Endothelial cell of umbilical vein (primary cell): ENCODE measurements at regions of chr3 and their contacts with region 1.

Region 1: GRCh38 chr3:169149349-169149890 is 514.1 kb downstream of the MECOM start:
- DNase-seq: peak; percentile 93
- H3K4me3 ChIP-seq: peak overlapping the region in 2 of 3 experiments; percentile 30 to 60
- H3K27ac ChIP-seq: peak overlapping the region; percentile 82
- H3K4me1 ChIP-seq: peaks cover 47% of the 10 kb centered on the region
- H3K27me3 ChIP-seq: no peaks in the 10 kb centered on the region
- CTCF ChIP-seq: peak; percentile 88 to 89
- POLR2A ChIP-seq: peak; percentile 71

Region 2: DNA sequence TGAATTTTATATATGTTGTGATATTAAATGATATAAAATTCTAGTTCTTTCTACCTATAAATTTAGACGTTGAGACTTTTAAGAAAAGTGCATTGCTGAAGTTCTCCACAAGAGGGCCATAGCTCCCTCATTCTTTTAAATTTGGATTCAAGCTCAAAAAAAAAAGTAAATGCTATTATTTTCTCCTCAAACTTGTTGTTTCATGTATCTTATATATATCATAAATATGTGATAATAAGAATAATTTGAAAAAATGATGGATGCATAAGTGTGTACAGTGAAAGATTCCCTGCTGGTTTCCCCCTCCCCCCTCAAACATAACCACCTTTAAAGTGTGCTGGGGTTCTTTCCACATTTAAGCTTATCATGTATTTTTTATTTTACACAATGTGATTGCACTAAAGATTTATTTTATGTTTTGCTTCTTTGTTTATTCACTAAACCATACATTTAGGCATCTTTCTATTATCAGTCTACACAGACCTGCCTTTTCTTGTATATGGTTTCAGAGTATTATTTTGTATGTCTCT is 284.3 kb before region 1 on chr3:
- CTCF ChIA-PET with region 1: interaction called, 24 read pairs
- POLR2A ChIA-PET with region 1: interaction called, 4 read pairs
- dilution Hi-C with region 1: no loop called
- intact Hi-C with region 1: loop called (anchors 2 kb)
- DNase-seq: peak; percentile 71
- H3K4me3 ChIP-seq: no peak overlapping the region
- H3K27ac ChIP-seq: no peak overlapping the region
- H3K4me1 ChIP-seq: no peaks in the 10 kb centered on the region
- H3K27me3 ChIP-seq: peaks cover 0 to 3% of the 10 kb centered on the region in 2 experiments
- CTCF ChIP-seq: peak; percentile 48 to 52
- POLR2A ChIP-seq: no peak

Region 3: DNA sequence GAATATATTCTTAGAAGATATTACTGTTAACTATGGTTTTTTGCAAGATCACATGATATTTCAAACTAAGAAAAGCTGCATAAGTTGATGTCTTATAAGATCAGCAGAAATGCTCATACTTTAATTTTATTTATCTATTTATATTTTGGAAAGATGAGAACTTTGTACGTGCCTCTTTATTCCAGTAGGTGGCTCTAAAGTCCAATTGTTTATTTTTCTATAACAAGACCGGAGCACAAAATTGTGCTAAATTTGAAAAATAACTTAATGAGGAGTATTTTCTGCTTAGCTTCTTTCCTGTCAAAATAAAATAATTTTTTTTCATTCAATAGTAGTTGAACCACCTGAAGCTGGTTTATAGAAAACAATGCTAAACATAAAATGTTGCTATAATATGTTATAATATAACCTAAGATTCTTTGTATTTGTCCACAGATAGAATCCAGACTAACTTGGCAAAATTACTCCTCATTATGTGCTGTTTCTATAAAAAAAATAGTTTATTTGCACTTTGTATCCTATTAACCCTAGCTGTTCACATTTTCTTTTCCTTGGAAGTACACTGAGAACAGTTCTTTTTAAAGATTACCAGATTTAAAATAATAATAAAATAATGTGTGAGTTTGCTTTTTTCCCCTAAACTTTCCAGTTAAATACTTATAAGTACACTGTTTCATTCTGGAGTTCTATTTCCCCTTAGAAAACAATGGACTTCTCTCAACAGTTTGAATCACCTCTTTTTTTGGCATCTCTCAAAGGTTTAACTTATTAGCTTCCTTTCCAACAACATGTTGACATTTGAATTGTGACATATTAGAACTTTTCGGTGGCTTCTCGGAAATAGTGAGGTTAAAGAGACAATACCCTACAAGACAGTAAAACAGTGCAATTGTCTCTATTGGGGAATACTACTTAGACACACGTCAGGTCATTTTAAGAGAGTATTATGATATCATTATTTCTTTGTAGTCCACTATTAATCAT is 15.9 kb before region 1 on chr3:
- CTCF ChIA-PET with region 1: interaction called, 40 read pairs
- POLR2A ChIA-PET with region 1: no interaction called
- dilution Hi-C with region 1: no loop called
- intact Hi-C with region 1: loop called (anchors 1 kb)
- DNase-seq: peak; percentile 83
- H3K4me3 ChIP-seq: no peak overlapping the region
- H3K27ac ChIP-seq: peak overlapping the region; percentile 52
- H3K4me1 ChIP-seq: peaks cover 44% of the 10 kb centered on the region
- H3K27me3 ChIP-seq: no peaks in the 10 kb centered on the region
- CTCF ChIP-seq: peak in 1 of 2 donors; percentile 16
- POLR2A ChIP-seq: peak; percentile 17

Region 4: GRCh38 chr3:169286214-169286613 is 136.8 kb after region 1 on chr3:
- CTCF ChIA-PET with region 1: interaction called, 11 read pairs
- POLR2A ChIA-PET with region 1: interaction called, 3 read pairs
- dilution Hi-C with region 1: no loop called
- intact Hi-C with region 1: no loop called
- DNase-seq: no peak
- H3K4me3 ChIP-seq: no peak overlapping the region
- H3K27ac ChIP-seq: no peak overlapping the region
- H3K4me1 ChIP-seq: peaks cover 20% of the 10 kb centered on the region
- H3K27me3 ChIP-seq: no peaks in the 10 kb centered on the region
- CTCF ChIP-seq: no peak
- POLR2A ChIP-seq: no peak

Region 5: GRCh38 chr3:169430707-169431404 is 281.4 kb after region 1 on chr3:
- CTCF ChIA-PET with region 1: interaction called, 10 read pairs
- POLR2A ChIA-PET with region 1: no interaction called
- dilution Hi-C with region 1: no loop called
- intact Hi-C with region 1: loop called (anchors 1 kb)
- DNase-seq: peak; percentile 90
- H3K4me3 ChIP-seq: no peak overlapping the region
- H3K27ac ChIP-seq: peak overlapping the region; percentile 79
- H3K4me1 ChIP-seq: peaks cover 30% of the 10 kb centered on the region
- H3K27me3 ChIP-seq: no peaks in the 10 kb centered on the region
- CTCF ChIP-seq: no peak
- POLR2A ChIP-seq: no peak

Region 6: GRCh38 chr3:169575373-169575772 is 426.0 kb after region 1 on chr3:
- CTCF ChIA-PET with region 1: interaction called, 6 read pairs
- POLR2A ChIA-PET with region 1: no interaction called
- dilution Hi-C with region 1: no loop called
- intact Hi-C with region 1: loop called (anchors 5 kb)
- DNase-seq: peak; percentile 85
- H3K4me3 ChIP-seq: peak overlapping the region in 1 of 3 experiments; percentile 28
- H3K27ac ChIP-seq: peak overlapping the region; percentile 15
- H3K4me1 ChIP-seq: peaks cover 25% of the 10 kb centered on the region
- H3K27me3 ChIP-seq: no peaks in the 10 kb centered on the region
- CTCF ChIP-seq: no peak
- POLR2A ChIP-seq: peak; percentile 16

Region 7: DNA sequence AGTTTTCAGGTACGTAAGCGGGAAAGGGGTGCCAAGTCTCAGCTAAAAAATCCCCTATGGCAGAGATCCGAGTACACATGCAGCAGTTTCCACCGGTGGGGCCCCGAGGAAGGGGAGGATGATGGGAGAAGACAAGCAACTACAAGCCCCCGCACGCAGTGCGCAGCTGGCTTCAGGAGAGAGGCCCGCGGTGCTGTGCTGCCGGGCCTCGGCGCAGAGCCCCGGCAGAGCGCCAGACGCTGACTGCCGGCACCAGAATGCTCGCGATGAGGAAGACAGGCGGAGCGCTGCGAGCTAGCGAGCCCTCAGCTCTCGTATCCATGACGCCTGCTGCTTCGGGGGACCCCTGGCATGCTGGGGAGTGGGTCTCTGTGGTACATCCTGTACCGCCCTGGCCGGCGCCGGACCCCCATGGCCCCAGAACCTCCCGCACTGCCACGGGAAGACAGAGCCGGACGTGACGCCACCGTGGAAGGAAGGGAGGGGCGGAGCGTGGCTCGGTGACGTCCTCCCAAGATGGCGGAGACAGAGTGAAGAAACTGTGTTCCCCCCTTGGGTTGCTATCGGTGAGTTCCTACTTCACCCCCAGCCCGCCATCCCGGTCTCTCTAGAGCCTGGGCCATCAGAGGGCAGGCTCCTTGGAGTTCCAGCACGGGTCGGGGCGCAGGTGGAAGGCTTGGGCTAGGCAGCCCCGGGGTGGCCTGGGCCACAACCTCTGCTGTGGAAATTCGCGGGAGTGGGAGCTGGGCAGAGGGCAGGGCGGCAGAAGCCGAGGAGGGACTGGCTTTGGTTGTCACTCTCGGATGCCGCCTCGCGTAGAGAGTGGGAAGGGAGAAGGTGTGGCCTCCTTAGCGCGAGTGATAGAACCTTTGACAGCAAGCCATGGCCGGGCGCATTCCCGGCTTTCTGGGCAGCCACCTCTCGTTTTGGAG is 623.7 kb after region 1 on chr3 and contains the start of gene MYNN:
- CTCF ChIA-PET with region 1: no interaction called
- POLR2A ChIA-PET with region 1: interaction called, 4 read pairs
- dilution Hi-C with region 1: no loop called
- intact Hi-C with region 1: loop called (anchors 5 kb)
- DNase-seq: peak; percentile 93
- H3K4me3 ChIP-seq: peak within 1 kb of the TSS; percentile 75 to 94 (median 77)
- H3K27ac ChIP-seq: peak within 1 kb of the TSS; percentile 94
- H3K4me1 ChIP-seq: peaks cover 13% of the 10 kb centered on the region
- H3K27me3 ChIP-seq: no peaks in the 10 kb centered on the region
- CTCF ChIP-seq: peak; percentile 4 to 24
- POLR2A ChIP-seq: peak; percentile 95
- total RNA-seq, gene MYNN: 11.7 and 12.7 TPM in 2 replicates